ENCODE measurements at regions of chr2 and their contacts with region 1.

Region 1: DNA sequence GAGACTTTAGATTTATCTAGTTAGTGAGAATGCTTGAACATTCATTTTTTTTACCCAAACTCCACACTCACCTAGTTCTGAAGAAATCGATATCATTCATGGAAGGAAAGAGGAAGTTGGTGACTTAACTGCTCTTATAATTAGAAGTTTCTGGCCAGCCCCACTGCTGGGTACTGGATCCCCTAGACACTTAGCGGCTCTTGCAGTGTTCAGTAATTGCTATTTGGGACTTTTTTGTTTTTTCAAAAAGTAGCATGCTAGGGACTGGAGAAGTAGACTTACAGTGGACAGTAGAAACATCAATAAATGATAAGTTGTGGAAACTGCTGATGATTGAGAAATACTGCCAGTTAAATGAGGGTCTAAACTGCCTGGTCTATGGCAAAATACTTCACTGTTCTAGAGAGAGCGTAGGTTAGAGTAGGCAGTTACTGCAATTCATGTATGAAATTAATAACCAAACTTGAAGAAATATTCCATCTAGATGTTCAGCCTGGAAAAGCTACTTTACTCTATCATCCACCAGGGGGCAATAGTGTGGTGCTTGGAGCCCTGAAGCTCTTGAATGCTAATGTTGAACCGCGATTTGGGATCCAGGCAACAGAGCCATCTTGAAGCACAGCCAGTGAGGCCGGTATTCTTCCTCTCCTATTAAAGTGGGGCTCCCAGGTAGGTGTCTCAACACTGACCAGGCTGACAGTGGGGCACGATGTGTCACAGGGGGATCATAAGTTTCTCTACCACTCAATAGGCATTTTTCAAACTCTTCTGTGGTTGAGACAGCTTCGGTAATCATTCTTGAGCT is 146.1 kb upstream of the SESTD1 start:
- DNase-seq: peak; percentile 67
- H3K4me3 Mint-ChIP-seq: no peak overlapping the region
- H3K27ac Mint-ChIP-seq: no peak overlapping the region
- H3K4me1 Mint-ChIP-seq: peaks cover 9% of the 10 kb centered on the region
- H3K27me3 Mint-ChIP-seq: no peaks in the 10 kb centered on the region
- CTCF ChIP-seq: peak; percentile 84

Region 2: GRCh38 chr2:179218848-179219594 is 191.7 kb before region 1 on chr2:
- CTCF ChIA-PET with region 1: no interaction called
- intact Hi-C with region 1: loop called (anchors 5 kb)
- DNase-seq: peak; percentile 72
- H3K4me3 Mint-ChIP-seq: no peak overlapping the region
- H3K27ac Mint-ChIP-seq: no peak overlapping the region
- H3K4me1 Mint-ChIP-seq: peaks cover 24% of the 10 kb centered on the region
- H3K27me3 Mint-ChIP-seq: no peaks in the 10 kb centered on the region
- CTCF ChIP-seq: peak; percentile 80

Measured in Calu3 (cell line).